Heart right ventricle (tissue), 16 donors: ENCODE measurements at regions of chr11 and their contacts with region 1.

Region 1: GRCh38 chr11:43504316-43504950 is 145.7 kb downstream of the TTC17 start:
- DNase-seq: no peak
- ATAC-seq: peak in 4 of 8 donors; percentile 44 to 63 (median 58)
- H3K4me3 ChIP-seq: no peak overlapping the region
- H3K27ac ChIP-seq: no peak overlapping the region
- H3K4me1 ChIP-seq: peaks cover 0 to 8% (median 0%) of the 10 kb centered on the region in 9 donors
- H3K27me3 ChIP-seq: peaks cover 0 to 4% (median 0%) of the 10 kb centered on the region in 7 donors
- CTCF ChIP-seq: peak in 7 of 9 donors; percentile 12 to 51 (median 37)

Region 2: DNA sequence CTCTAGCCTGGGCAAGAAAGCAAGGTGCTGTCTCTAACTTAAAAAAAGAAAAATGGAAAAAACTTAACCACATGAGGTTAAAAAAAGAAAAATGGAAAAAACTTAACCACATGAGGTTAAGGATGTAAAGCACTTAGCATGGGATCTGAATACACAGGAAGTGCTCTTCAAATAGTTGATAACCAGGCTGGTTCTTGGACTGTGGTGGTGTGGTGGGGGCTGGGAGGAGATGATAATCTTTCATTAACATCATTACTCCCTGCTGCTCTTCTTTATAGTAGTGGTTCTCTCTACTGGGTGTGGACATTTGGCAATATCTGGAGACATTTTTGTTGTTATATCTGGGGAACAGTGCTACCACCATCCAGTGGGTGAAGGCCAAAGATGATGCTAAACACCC is 57.3 kb before region 1 on chr11:
- intact Hi-C with region 1: loop called in 1 of 10 experiments (anchors 10 kb)
- DNase-seq: no peak
- ATAC-seq: no peak
- H3K4me3 ChIP-seq: no peak overlapping the region
- H3K27ac ChIP-seq: no peak overlapping the region
- H3K4me1 ChIP-seq: no peaks in the 10 kb centered on the region
- H3K27me3 ChIP-seq: no peaks in the 10 kb centered on the region
- CTCF ChIP-seq: no peak

Region 3: DNA sequence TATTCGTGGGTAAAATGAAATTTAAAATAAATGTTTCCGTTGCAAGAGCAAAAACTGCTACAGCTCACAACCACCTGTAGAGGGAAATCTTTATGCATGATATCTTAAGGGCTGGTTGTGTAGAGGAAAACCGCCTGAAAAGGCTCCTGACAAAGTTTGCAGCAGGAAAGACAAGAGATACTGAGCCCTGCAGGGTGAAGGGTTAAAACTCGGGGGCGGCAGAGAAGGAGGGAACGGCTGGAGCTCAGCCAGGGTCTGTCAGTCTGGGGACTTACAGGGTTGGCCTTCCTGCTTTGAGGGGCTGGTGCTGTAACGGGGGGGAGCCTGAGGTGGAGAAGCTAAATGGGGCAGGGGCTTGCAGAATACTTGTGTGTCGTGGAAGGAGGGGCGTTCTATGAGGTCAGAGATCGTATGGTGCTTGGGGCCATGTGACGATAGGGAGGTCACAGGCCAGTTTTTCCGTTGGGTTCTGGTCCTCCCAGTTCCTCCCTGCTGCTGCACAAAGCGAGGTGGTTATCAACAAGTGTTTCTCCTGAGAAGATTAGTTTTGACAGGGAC is 53.2 kb after region 1 on chr11:
- intact Hi-C with region 1: loop called in 1 of 10 experiments (anchors 5 kb)
- DNase-seq: no peak
- ATAC-seq: peak in 3 of 8 donors; percentile 30 to 46 (median 37)
- H3K4me3 ChIP-seq: no peak overlapping the region
- H3K27ac ChIP-seq: no peak overlapping the region
- H3K4me1 ChIP-seq: peaks cover 0 to 36% (median 14%) of the 10 kb centered on the region in 9 donors
- H3K27me3 ChIP-seq: peaks cover 0 to 88% (median 84%) of the 10 kb centered on the region in 7 donors
- CTCF ChIP-seq: peak in 7 of 9 donors; percentile 18 to 49 (median 31)

Region 4: DNA sequence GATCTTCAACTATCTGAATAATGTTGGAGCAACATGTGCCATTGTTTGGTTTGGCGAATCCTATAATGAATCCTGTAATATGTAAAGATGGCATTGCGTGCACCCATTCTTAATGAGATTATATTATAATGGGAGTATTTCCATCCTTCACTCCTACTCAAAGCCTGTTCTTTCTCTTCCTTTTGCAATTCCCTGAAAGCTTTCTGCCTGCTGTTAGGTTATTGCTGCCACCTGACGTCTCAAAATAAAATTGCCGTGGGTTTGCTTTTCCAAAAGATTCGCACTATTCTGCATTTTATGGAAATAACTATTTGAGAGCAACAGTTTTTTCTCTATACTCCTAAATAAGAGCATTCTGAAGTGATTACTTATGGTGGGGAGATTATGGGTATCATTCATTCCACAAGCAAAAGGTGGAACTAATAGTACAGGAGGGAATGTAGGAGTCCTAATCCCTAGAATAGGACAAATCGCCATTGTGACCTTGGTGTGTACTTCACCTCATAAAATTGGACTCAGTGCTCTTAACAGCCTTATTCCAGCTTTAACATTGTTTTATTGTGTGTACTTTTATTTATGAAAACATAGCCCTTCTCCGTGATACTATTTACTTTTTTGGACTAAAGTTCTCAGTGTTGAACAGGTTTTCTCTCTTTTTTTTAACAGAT is 306.6 kb after region 1 on chr11:
- intact Hi-C with region 1: loop called in 1 of 10 experiments (anchors 10 kb)
- DNase-seq: no peak
- ATAC-seq: peak in 1 of 8 donors; percentile 31
- H3K4me3 ChIP-seq: no peak overlapping the region
- H3K27ac ChIP-seq: no peak overlapping the region
- H3K4me1 ChIP-seq: no peaks in the 10 kb centered on the region
- H3K27me3 ChIP-seq: no peaks in the 10 kb centered on the region
- CTCF ChIP-seq: peak in 8 of 9 donors; percentile 36 to 62 (median 46)

Region 5: GRCh38 chr11:43852057-43852636 is 347.7 kb after region 1 on chr11:
- intact Hi-C with region 1: loop called in 1 of 10 experiments (anchors 10 kb)
- DNase-seq: peak in 1 of 2 donors; percentile 46
- ATAC-seq: peak in 3 of 8 donors; percentile 38 to 74 (median 59)
- H3K4me3 ChIP-seq: no peak overlapping the region
- H3K27ac ChIP-seq: no peak overlapping the region
- H3K4me1 ChIP-seq: no peaks in the 10 kb centered on the region
- H3K27me3 ChIP-seq: no peaks in the 10 kb centered on the region
- CTCF ChIP-seq: peak; percentile 60 to 83 (median 78)